Activated CD8-positive, alpha-beta T cell treated with anti-CD3 and anti-CD28 coated beads for 36 hours (primary cell): ENCODE measurements at regions of chr3 and their contacts with region 1.

Region 1: GRCh38 chr3:138694287-138695007 is 85.9 kb downstream of the FAIM start:
- DNase-seq: no peak
- ATAC-seq: no peak
- H3K4me3 Mint-ChIP-seq: no peak overlapping the region
- H3K27ac Mint-ChIP-seq: no peak overlapping the region
- H3K4me1 Mint-ChIP-seq: no peaks in the 10 kb centered on the region
- H3K27me3 Mint-ChIP-seq: no peaks in the 10 kb centered on the region
- CTCF ChIP-seq: no peak

Region 2: DNA sequence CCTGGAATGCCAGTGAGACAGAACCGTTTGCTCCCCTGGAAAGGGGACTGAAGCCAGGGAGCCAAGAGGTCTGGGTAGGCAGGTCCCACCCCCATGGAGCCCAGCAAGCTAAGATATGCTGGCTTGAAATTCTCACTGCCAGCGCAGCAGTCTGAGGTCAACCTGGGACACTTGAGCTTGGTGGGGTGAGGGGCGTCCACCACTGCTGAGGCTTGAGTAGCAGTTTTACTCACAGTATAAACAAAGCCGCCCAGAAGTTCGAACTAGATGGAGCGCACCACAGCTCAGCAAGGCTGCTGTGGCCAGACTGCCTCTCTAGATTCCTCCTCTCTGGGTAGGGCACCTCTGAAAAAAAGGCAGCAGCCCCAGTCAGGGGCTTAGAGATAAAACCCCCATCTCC is 133.9 kb before region 1 on chr3:
- CTCF ChIA-PET with region 1: no interaction called
- POLR2A ChIA-PET with region 1: no interaction called
- intact Hi-C with region 1: no loop called
- DNase-seq: no peak
- ATAC-seq: no peak
- H3K4me3 Mint-ChIP-seq: no peak overlapping the region
- H3K27ac Mint-ChIP-seq: no peak overlapping the region
- H3K4me1 Mint-ChIP-seq: peaks cover 4% of the 10 kb centered on the region
- H3K27me3 Mint-ChIP-seq: no peaks in the 10 kb centered on the region
- CTCF ChIP-seq: no peak

Region 3: GRCh38 chr3:138834359-138835212 is 140.1 kb after region 1 on chr3 and contains the start of gene PIK3CB:
- CTCF ChIA-PET with region 1: no interaction called
- POLR2A ChIA-PET with region 1: no interaction called
- intact Hi-C with region 1: loop called (anchors 10 kb)
- DNase-seq: peak; percentile 88
- ATAC-seq: peak; percentile 93
- H3K4me3 Mint-ChIP-seq: peak within 1 kb of the TSS; percentile 84
- H3K27ac Mint-ChIP-seq: peak within 1 kb of the TSS; percentile 93
- H3K4me1 Mint-ChIP-seq: peaks cover 22% of the 10 kb centered on the region
- H3K27me3 Mint-ChIP-seq: no peaks in the 10 kb centered on the region
- CTCF ChIP-seq: peak; percentile 41
- total RNA-seq, gene PIK3CB: 12.4 to 13.4 TPM